Posterior vena cava (tissue), 2 donors: ENCODE measurements at regions of chr22 and their contacts with region 1.

Region 1: DNA sequence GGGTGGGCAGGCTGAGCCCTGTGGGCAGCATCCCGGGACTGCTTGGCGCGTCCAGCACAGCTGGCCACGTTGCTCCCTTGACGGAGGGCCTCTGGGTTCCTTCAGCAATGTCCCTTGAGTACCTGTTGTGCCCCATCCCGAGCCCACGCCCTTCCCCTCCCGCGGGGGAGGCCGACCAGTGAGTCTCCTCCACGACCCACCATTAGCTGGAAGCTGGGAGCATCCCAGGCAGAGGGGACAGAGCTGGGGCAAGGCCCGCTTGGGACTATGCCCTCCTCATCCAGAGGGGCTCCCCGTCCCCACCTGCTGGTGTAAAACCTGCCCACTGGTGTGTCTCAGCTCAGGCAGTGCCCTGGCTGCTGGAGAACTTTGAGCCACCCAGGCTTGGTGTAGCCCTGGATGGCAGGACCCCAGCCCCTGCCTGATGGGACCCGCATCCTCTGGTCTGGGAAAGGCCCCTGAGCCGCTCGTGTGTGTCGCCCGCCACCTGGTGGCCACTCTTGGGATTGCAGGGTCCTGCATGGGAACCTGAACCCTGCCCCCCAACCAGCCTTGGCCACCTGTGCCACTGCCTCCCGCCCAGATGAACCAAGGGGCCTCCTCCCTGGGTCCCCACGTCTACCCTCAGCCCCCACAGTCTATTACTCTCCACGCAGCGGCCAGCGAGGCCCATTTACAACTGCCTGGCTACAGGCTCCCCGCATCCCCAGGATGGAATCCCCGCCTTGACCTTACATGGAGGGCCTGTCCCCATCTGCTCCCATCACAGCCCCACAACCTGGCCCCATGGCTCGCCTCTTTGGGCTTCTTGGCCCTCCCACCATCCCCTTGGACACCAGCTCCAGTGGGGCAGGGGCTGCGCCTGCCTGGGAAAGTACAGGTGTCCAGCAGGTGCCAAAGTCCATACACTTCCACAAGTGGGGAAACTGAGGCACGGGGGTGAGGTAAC is 16.6 kb upstream of the ARHGAP8 start:
- DNase-seq: peak; percentile 90

Region 2: GRCh38 chr22:44697423-44698141 is 38.2 kb before region 1 on chr22:
- intact Hi-C with region 1: loop called (anchors 2 to 5 kb)
- DNase-seq: peak; percentile 93